Ovary (tissue), 10 donors: ENCODE measurements at regions of chr2 and their contacts with region 1.

Region 1: GRCh38 chr2:125175415-125175814 is 1150.3 kb downstream of the CNTNAP5 start:
- DNase-seq: no peak
- H3K4me3 ChIP-seq: no peak overlapping the region
- H3K27ac ChIP-seq: no peak overlapping the region
- H3K4me1 ChIP-seq: no peaks in the 10 kb centered on the region
- H3K27me3 ChIP-seq: no peaks in the 10 kb centered on the region
- CTCF ChIP-seq: no peak
- EP300 ChIP-seq: no peak
- POLR2A ChIP-seq: no peak

Region 2: DNA sequence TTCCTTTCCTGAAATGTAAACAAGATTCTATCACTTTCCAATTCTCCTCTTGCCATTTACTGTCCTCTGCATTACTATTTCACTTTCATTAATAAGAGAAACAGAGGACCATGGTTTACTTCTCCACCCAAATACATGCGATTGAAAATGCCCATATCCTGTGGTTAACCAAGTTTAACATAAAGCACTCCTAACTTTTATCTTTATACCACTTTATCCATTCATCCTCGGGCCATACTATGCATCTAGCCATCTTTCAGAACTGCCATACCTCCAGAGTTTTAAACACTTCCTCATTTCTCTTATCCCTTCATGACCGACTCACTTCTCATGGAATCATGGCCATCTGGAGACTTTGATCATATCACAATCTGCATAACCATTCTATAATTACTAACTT is 32.0 kb after region 1 on chr2:
- intact Hi-C with region 1: loop called in 1 of 4 experiments (anchors 1 kb)
- DNase-seq: no peak
- H3K4me3 ChIP-seq: no peak overlapping the region
- H3K27ac ChIP-seq: no peak overlapping the region
- H3K4me1 ChIP-seq: no peaks in the 10 kb centered on the region
- H3K27me3 ChIP-seq: no peaks in the 10 kb centered on the region
- CTCF ChIP-seq: no peak
- EP300 ChIP-seq: no peak
- POLR2A ChIP-seq: no peak

Region 3: DNA sequence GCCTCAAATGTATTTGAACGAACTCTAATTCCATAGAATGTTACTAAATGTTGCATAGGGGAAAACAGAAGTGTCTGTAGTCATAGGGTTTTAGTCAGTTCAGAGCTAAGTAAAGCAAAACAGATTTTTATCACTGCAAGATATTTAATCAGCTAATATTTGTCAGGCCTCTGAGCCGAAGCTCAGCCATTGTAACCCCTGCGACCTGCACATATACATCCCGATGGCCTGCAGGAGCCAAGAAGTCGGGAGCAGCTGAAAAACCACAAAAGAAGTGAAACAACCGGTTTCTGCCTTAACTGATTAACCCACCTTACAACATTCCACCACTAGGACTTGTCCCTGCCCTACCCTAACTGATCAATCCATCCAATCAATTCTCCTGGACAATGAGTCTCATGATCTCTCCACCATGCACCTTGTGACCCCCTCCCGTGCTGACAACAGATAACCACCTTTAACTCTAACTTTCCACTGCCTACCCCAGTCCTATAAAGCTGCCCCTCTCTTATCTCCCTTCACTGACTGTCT is 535.1 kb after region 1 on chr2:
- intact Hi-C with region 1: no loop called
- DNase-seq: no peak
- H3K4me3 ChIP-seq: no peak overlapping the region
- H3K27ac ChIP-seq: no peak overlapping the region
- H3K4me1 ChIP-seq: no peaks in the 10 kb centered on the region
- H3K27me3 ChIP-seq: no peaks in the 10 kb centered on the region
- CTCF ChIP-seq: no peak
- EP300 ChIP-seq: no peak
- POLR2A ChIP-seq: no peak